AG04450 (cell line): ENCODE measurements at regions of chr11 and their contacts with region 1.

Region 1: DNA sequence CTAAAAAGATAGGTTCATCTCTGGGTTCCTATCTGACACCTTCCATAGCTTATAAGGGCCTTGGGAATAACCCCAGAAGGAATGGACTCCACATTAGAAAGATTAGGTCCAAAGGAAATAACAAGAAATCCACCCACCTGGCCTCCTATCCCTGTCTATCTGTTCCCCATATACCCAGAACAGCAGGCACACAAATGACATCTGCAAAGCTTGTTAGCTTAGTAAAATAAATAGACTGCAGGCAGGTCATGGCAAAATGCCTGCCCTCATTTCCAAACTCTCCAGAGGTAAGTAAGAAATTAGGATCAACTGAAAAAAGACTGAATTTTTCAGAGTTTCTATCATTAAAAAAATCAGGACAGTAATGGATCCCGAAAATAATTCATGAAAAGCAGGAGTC is 489.5 kb downstream of the DLG2 start:
- DNase-seq: no peak
- H3K4me3 ChIP-seq: no peak overlapping the region
- H3K27ac ChIP-seq: no peak overlapping the region
- H3K27me3 ChIP-seq: no peaks in the 10 kb centered on the region
- CTCF ChIP-seq: no peak

Region 2: DNA sequence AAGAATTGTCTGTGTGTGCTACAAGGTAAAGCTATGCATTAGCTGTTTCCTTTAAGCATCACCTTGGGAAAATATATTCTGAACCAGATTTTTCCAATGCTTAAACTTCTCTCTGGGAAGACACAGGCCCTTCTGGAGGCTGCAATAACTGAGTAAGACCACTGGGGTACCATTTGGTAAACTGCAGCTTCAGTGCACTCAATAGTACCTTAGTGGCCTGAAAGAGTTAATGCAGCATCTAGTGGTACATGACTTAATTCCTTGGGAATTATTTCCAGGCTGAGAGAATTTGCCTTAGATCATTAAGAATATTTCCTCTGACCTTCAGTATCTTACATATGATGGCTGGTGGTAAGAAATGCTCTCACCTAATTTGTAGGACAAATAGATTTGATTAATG is 237.9 kb before region 1 on chr11:
- CTCF ChIA-PET with region 1: no interaction called
- POLR2A ChIA-PET with region 1: no interaction called
- DNase-seq: no peak
- H3K4me3 ChIP-seq: no peak overlapping the region
- H3K27ac ChIP-seq: no peak overlapping the region
- H3K27me3 ChIP-seq: no peaks in the 10 kb centered on the region
- CTCF ChIP-seq: peak; percentile 49

Region 3: GRCh38 chr11:85154294-85154693 is 16.7 kb after region 1 on chr11:
- CTCF ChIA-PET with region 1: interaction called, 10 read pairs
- POLR2A ChIA-PET with region 1: no interaction called
- DNase-seq: no peak
- H3K4me3 ChIP-seq: no peak overlapping the region
- H3K27ac ChIP-seq: no peak overlapping the region
- H3K27me3 ChIP-seq: no peaks in the 10 kb centered on the region
- CTCF ChIP-seq: no peak